Posterior vena cava (tissue), 2 donors: ENCODE measurements at regions of chr12 and their contacts with region 1.

Region 1: DNA sequence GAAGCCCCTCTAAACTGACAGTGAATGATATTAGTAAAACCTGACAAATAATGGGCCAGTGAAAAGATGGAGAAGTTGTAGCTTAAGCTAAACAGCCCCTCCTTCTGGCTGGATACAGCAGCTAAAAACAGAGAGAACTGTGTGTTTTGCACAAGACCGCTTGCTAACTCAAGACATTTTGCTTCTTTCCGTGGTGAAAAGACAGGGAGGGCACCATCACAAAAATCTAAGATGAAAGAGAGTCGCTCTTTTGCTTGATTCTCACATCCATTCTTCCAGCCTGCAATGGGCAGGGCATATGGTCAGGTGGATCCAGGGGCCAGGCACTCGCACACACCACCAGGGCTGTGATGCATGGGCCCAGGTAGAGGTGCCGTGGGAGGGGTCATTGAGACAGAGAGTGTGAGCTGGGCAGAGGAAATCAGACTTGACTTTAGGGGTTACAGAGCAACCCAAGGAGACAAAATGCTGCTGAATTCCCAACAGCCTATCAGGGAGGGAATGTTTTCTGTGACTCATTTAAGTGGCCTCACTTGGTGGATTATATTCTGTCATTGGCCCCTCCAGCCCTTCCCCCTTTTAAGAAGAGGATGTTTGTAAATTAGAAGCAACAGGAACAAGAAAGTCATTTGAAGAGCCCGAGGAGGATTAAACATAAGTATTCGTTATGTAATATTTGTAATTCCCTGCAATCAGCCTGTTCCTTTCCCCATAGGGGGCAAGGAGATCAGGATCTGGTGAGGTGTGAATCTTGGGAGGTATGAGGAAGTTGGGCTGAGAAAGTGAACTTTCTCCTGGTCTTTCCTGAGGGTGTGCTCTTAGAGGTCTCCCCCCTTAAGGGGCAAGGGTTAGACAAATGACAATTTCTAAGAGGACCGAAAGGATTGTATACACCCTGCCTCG is 12.3 kb downstream of the EMP1 start:
- DNase-seq: no peak

Region 2: DNA sequence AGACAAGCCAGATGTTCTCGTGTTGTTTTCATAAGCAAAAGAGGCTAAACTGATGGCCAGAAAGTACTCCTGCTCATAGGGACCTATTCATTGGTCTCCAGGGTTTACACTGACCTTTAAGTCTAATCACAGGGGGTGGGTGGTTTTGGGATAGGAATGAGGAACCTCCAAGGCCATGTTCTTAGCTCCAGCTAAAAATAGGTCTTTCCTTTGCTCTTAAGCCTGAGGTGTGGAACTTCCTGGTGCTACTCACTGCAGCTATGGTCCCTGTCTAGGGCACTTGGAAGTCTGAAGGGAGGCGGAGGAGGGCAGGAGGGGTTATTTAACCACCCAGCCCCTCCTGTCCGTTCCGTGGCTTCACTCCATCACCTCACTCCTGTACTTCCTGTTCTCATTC is 298.8 kb before region 1 on chr12:
- intact Hi-C with region 1: loop called (anchors 5 to 10 kb)
- DNase-seq: peak; percentile 62